ENCODE measurements at regions of chr2 and their contacts with region 1.

Region 1: DNA sequence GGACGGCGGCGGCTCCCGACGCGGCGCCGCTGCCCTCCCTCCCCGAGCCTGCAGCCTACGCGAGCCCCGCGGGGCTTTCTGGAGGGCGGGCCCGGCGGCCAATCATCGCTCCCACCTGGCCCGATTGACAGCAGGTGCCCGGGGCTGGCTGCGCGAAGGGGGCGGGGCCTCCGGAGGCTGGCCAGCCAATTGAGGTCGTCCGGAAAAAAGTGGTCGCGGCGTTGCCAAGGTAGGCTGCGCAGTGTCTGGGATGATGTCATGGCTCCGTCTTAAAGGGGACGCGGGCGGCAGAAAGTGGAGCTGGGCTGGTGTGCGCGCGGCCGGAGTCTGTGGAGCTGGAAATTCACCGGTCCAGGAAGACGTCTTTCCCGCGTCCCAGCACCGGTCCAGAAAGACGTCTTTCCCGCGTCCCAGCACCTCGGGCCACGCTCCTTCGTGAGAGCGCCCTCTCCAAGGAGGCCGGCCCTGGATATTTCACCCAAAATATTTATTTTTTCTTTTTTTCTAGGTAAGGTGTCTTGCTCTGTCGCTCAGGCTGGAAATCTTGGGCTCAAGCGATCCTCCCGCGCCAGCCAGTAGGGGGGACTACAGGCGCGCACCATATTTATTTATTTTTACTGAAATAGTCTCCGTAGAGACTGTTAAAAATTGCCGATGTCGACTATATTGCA is at the start of gene ACTR1B:
- DNase-seq: peak; percentile 98
- ATAC-seq: peak; percentile 97
- H3K4me3 ChIP-seq: peak within 1 kb of the TSS; percentile 77 to 81
- H3K27ac ChIP-seq: peak within 1 kb of the TSS; percentile 80 to 91
- H3K4me1 ChIP-seq: no peaks in the 10 kb centered on the region
- H3K27me3 ChIP-seq: no peaks in the 10 kb centered on the region
- total RNA-seq, gene ACTR1B: 70.6 to 74.4 TPM

Region 2: GRCh38 chr2:97645695-97646629 is 18.1 kb before region 1 on chr2 and contains the start of gene COX5B:
- intact Hi-C with region 1: loop called (anchors 1 to 2 kb)
- DNase-seq: peak; percentile 100
- ATAC-seq: peak; percentile 100
- H3K4me3 ChIP-seq: peak within 1 kb of the TSS; percentile 93 to 96
- H3K27ac ChIP-seq: peak within 1 kb of the TSS; percentile 67 to 73
- H3K4me1 ChIP-seq: peaks cover 0 to 3% of the 10 kb centered on the region in 2 donors
- H3K27me3 ChIP-seq: no peaks in the 10 kb centered on the region
- total RNA-seq, gene COX5B: 114 to 130 TPM